ENCODE measurements at regions of chr4 and their contacts with region 1.

Region 1: DNA sequence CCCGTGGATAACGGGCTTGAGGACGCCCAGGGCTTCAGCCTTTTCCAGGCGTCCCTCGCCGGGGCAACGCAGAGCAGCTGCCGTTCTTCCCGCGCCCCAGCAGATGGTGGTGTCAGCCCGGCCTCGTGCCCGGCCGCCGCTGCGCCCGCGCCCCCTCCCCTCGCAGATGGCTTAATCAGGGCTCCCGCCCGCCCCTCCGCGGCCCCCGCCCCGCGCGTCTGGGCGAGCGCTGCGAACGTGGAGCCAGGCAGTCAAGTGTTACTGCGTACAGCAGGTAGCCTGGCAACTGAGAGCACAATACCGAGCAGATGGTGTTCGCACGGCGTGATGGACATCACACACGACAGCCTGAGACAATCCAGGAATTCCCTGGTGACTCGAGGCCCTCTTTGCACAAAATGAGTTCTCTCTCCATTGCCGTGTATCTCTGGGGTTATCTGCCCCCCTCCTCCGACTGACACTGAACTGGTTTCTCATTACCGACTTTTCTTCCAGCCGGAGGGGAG is 69.3 kb downstream of the MGST2 start:
- DNase-seq: peak; percentile 86
- ATAC-seq: peak; percentile 83
- H3K4me3 Mint-ChIP-seq: peak overlapping the region; percentile 65
- H3K27ac Mint-ChIP-seq: no peak overlapping the region
- H3K4me1 Mint-ChIP-seq: peaks cover 13% of the 10 kb centered on the region
- H3K27me3 Mint-ChIP-seq: peaks cover 33% of the 10 kb centered on the region

Region 2: GRCh38 chr4:139015269-139015947 is 719.5 kb before region 1 on chr4 and contains the start of gene NOCT:
- CTCF ChIA-PET with region 1: no interaction called
- POLR2A ChIA-PET with region 1: no interaction called
- intact Hi-C with region 1: no loop called
- DNase-seq: peak; percentile 98
- ATAC-seq: peak; percentile 92
- H3K4me3 Mint-ChIP-seq: peak within 1 kb of the TSS; percentile 90
- H3K27ac Mint-ChIP-seq: peak within 1 kb of the TSS; percentile 96
- H3K4me1 Mint-ChIP-seq: peaks cover 41% of the 10 kb centered on the region
- H3K27me3 Mint-ChIP-seq: no peaks in the 10 kb centered on the region
- total RNA-seq, gene NOCT: 16.5 to 20.5 TPM

Region 3: DNA sequence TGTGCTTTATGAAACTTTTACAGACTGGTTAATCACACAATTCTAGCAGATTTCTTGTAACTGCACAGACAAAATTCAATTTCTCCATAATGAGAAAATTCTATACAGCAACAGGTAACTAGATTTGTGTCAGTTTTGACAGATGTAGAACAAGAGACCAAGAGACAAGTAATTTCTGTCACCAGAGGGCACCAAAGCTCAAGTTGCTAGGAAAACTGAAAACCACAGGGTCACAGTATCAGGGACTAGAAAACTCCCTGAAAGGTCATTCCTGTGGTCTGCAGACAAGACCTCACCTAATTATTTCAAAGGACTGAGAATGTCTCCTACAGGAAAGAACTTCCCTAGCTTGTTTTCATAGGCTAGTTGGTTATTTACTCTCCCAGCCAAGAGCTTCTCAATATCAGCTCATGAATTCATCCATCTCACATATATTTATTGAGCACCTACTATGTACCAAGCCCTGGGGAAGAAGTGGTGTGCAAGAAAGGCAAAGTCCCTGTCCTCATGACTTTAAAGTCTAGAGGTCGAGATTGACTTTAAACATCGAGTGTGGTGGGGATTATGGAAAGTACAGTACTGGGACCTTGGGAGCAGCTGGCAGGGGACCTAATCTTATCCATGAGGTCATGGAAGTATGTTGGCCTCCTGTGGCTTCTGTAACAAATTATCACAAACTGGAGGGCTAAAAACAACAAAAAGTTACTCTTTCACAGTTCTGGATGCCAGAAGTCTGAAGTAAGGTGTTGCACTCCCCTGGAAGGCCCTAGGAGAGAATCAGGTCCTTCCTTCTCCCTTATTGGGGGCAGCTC is 131.1 kb before region 1 on chr4:
- CTCF ChIA-PET with region 1: interaction called, 4 read pairs
- POLR2A ChIA-PET with region 1: no interaction called
- intact Hi-C with region 1: loop called in 1 of 2 experiments (anchors 5 kb)
- DNase-seq: peak; percentile 45
- ATAC-seq: peak; percentile 62
- H3K4me3 Mint-ChIP-seq: no peak overlapping the region
- H3K27ac Mint-ChIP-seq: no peak overlapping the region
- H3K4me1 Mint-ChIP-seq: peaks cover 10% of the 10 kb centered on the region
- H3K27me3 Mint-ChIP-seq: peaks cover 5% of the 10 kb centered on the region

Region 4: GRCh38 chr4:139858436-139859225 is 123.7 kb after region 1 on chr4:
- CTCF ChIA-PET with region 1: no interaction called
- POLR2A ChIA-PET with region 1: no interaction called
- intact Hi-C with region 1: loop called in 1 of 2 experiments (anchors 5 kb)
- DNase-seq: peak; percentile 55
- ATAC-seq: peak; percentile 94
- H3K4me3 Mint-ChIP-seq: no peak overlapping the region
- H3K27ac Mint-ChIP-seq: no peak overlapping the region
- H3K4me1 Mint-ChIP-seq: peaks cover 32% of the 10 kb centered on the region
- H3K27me3 Mint-ChIP-seq: peaks cover 33% of the 10 kb centered on the region

Region 5: DNA sequence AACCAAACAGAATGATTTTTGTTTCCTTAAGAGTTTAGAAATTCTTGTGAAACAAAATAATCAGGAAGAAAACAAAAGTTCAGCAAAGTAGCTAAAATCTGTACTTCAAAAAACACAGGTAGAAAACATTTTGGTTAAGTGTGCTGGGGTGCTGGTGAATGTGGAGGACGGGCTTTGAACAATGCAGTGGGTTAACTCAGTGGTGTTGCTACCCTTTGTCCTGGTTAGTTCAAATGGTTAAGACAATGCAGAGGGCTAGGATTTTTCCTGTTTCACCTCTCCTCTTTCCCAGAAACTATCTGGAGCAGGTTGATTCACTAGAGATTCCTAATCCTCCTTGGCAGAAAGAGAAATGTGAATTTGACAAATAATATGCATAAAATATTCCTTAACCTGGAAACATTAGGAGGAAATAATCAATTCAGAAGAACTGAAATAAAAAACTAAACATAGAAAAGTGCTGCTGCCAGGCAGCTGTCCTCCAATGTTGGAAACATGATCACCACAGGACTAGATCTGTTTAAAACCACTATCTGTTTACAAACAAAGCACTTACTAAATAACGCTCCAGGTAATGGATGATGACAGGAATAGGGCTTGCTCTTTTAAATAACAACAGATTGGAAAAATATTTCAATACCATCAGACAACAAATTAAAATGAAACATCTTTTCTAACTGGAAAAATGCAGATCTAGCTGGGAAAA is 270.1 kb after region 1 on chr4:
- CTCF ChIA-PET with region 1: interaction called, 4 read pairs
- POLR2A ChIA-PET with region 1: no interaction called
- intact Hi-C with region 1: loop called in 1 of 2 experiments (anchors 5 kb)
- DNase-seq: no peak
- ATAC-seq: no peak
- H3K4me3 Mint-ChIP-seq: no peak overlapping the region
- H3K27ac Mint-ChIP-seq: no peak overlapping the region
- H3K4me1 Mint-ChIP-seq: no peaks in the 10 kb centered on the region
- H3K27me3 Mint-ChIP-seq: peaks cover 2% of the 10 kb centered on the region

Region 6: GRCh38 chr4:140049024-140049848 is 314.3 kb after region 1 on chr4:
- CTCF ChIA-PET with region 1: no interaction called
- POLR2A ChIA-PET with region 1: no interaction called
- intact Hi-C with region 1: loop called (anchors 1 to 5 kb)
- DNase-seq: peak; percentile 71
- ATAC-seq: peak; percentile 91
- H3K4me3 Mint-ChIP-seq: peak overlapping the region; percentile 73
- H3K27ac Mint-ChIP-seq: peak overlapping the region; percentile 87
- H3K4me1 Mint-ChIP-seq: peaks cover 45% of the 10 kb centered on the region
- H3K27me3 Mint-ChIP-seq: peaks cover 8% of the 10 kb centered on the region

Region 7: GRCh38 chr4:140116442-140117104 is 381.6 kb after region 1 on chr4:
- CTCF ChIA-PET with region 1: interaction called, 3 read pairs
- POLR2A ChIA-PET with region 1: interaction called, 10 read pairs
- intact Hi-C with region 1: no loop called
- DNase-seq: peak; percentile 58
- ATAC-seq: peak; percentile 99
- H3K4me3 Mint-ChIP-seq: no peak overlapping the region
- H3K27ac Mint-ChIP-seq: peak overlapping the region; percentile 72
- H3K4me1 Mint-ChIP-seq: peaks cover 25% of the 10 kb centered on the region
- H3K27me3 Mint-ChIP-seq: no peaks in the 10 kb centered on the region

Region 8: DNA sequence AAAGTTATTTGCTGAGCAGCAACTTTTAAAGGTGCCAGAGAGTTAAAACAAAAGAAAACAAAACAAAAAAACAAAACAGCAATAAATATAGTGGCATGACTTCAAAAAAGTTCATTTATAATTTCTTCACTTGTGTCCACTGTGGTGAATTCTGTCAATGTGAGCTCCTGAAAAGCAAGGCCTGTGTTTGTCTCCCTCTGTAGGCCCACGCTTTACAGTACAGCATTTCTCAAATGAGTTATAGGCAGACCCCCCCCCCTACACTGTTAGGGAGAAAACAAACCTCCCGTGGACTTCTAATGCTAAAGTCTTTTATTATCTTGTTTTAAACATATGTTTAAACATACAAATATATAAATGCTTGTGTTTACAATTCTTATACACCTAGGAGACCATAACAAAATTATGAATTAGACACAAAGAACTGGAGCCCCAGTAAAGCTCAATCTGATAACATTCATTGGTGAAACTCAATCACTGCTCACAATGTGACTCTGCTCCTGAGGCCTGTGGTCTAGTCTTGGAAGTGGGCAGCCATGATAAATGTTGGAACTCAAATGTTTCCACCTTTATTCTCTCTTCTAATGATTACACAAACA is 591.6 kb after region 1 on chr4:
- CTCF ChIA-PET with region 1: interaction called, 3 read pairs
- POLR2A ChIA-PET with region 1: no interaction called
- intact Hi-C with region 1: loop called in 1 of 2 experiments (anchors 1 kb)
- DNase-seq: peak; percentile 31
- ATAC-seq: no peak
- H3K4me3 Mint-ChIP-seq: no peak overlapping the region
- H3K27ac Mint-ChIP-seq: no peak overlapping the region
- H3K4me1 Mint-ChIP-seq: peaks cover 4% of the 10 kb centered on the region
- H3K27me3 Mint-ChIP-seq: peaks cover 3% of the 10 kb centered on the region